ENCODE measurements at regions of chr5 and their contacts with region 1.

Region 1: GRCh38 chr5:58460732-58461286 is 923 bp upstream of the PLK2 start:
- DNase-seq: peak; percentile 93
- H3K4me3 Mint-ChIP-seq: peak overlapping the region; percentile 76
- H3K27ac Mint-ChIP-seq: peak overlapping the region; percentile 85
- H3K4me1 Mint-ChIP-seq: peaks cover 19% of the 10 kb centered on the region
- H3K27me3 Mint-ChIP-seq: no peaks in the 10 kb centered on the region
- CTCF ChIP-seq: peak; percentile 72

Region 2: GRCh38 chr5:56900858-56901578 is 1559.8 kb before region 1 on chr5:
- CTCF ChIA-PET with region 1: no interaction called
- intact Hi-C with region 1: loop called (anchors 5 kb)
- DNase-seq: peak; percentile 54
- H3K4me3 Mint-ChIP-seq: no peak overlapping the region
- H3K27ac Mint-ChIP-seq: no peak overlapping the region
- H3K4me1 Mint-ChIP-seq: no peaks in the 10 kb centered on the region
- H3K27me3 Mint-ChIP-seq: no peaks in the 10 kb centered on the region
- CTCF ChIP-seq: peak; percentile 70

Region 3: DNA sequence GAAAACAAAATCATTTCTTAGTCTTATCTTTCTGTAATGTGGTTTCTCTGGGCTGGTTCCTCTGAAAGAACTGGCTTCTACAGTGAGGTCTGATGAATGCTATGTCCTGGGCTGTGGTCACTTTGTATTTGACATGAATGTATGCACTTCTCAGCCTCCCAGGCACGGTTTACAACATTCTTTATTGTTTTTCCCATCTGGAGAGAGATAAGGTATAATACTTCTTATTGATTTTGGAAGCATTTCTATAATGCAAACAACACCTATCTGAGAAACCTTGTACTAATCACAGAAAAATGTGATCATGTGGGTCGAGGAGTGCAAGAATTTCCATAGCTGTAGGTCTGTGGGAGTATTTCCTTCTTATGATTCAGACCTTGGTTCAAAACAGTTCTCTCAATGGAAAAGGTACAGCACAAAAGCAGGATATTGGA is 1025.1 kb before region 1 on chr5:
- CTCF ChIA-PET with region 1: no interaction called
- intact Hi-C with region 1: loop called (anchors 1 kb)
- DNase-seq: peak; percentile 60
- H3K4me3 Mint-ChIP-seq: peak overlapping the region; percentile 10
- H3K27ac Mint-ChIP-seq: peak overlapping the region; percentile 87
- H3K4me1 Mint-ChIP-seq: peaks cover 57% of the 10 kb centered on the region
- H3K27me3 Mint-ChIP-seq: no peaks in the 10 kb centered on the region
- CTCF ChIP-seq: no peak

Region 4: GRCh38 chr5:57650360-57651069 is 810.3 kb before region 1 on chr5:
- CTCF ChIA-PET with region 1: interaction called, 7 read pairs
- intact Hi-C with region 1: loop called (anchors 5 kb)
- DNase-seq: peak; percentile 50
- H3K4me3 Mint-ChIP-seq: no peak overlapping the region
- H3K27ac Mint-ChIP-seq: peak overlapping the region; percentile 19
- H3K4me1 Mint-ChIP-seq: peaks cover 18% of the 10 kb centered on the region
- H3K27me3 Mint-ChIP-seq: no peaks in the 10 kb centered on the region
- CTCF ChIP-seq: peak; percentile 67

Region 5: GRCh38 chr5:57779383-57780223 is 681.2 kb before region 1 on chr5:
- CTCF ChIA-PET with region 1: interaction called, 41 read pairs
- intact Hi-C with region 1: loop called (anchors 1 kb)
- DNase-seq: peak; percentile 60
- H3K4me3 Mint-ChIP-seq: no peak overlapping the region
- H3K27ac Mint-ChIP-seq: peak overlapping the region; percentile 22
- H3K4me1 Mint-ChIP-seq: peaks cover 59% of the 10 kb centered on the region
- H3K27me3 Mint-ChIP-seq: no peaks in the 10 kb centered on the region
- CTCF ChIP-seq: peak; percentile 44

Region 6: GRCh38 chr5:58080558-58080957 is 380.3 kb before region 1 on chr5:
- CTCF ChIA-PET with region 1: no interaction called
- intact Hi-C with region 1: loop called (anchors 10 kb)
- DNase-seq: peak; percentile 9
- H3K4me3 Mint-ChIP-seq: no peak overlapping the region
- H3K27ac Mint-ChIP-seq: no peak overlapping the region
- H3K4me1 Mint-ChIP-seq: peaks cover 16% of the 10 kb centered on the region
- H3K27me3 Mint-ChIP-seq: no peaks in the 10 kb centered on the region
- CTCF ChIP-seq: no peak

Region 7: GRCh38 chr5:58188262-58188651 is 272.6 kb before region 1 on chr5:
- CTCF ChIA-PET with region 1: interaction called, 5 read pairs
- intact Hi-C with region 1: loop called (anchors 1 kb)
- DNase-seq: peak; percentile 55
- H3K4me3 Mint-ChIP-seq: no peak overlapping the region
- H3K27ac Mint-ChIP-seq: no peak overlapping the region
- H3K4me1 Mint-ChIP-seq: peaks cover 42% of the 10 kb centered on the region
- H3K27me3 Mint-ChIP-seq: no peaks in the 10 kb centered on the region
- CTCF ChIP-seq: no peak